ENCODE measurements at regions of chr7 and their contacts with region 1.

Region 1: GRCh38 chr7:7761340-7761980 is 43.1 kb upstream of the RPA3 start:
- DNase-seq: no peak
- H3K4me3 Mint-ChIP-seq: peak overlapping the region; percentile 90
- H3K27ac Mint-ChIP-seq: peak overlapping the region; percentile 15
- H3K4me1 Mint-ChIP-seq: peaks cover 33% of the 10 kb centered on the region
- H3K27me3 Mint-ChIP-seq: no peaks in the 10 kb centered on the region

Region 2: GRCh38 chr7:7424151-7424873 is 337.1 kb before region 1 on chr7:
- intact Hi-C with region 1: loop called (anchors 5 kb)
- DNase-seq: no peak
- H3K4me3 Mint-ChIP-seq: peak overlapping the region; percentile 67
- H3K27ac Mint-ChIP-seq: no peak overlapping the region
- H3K4me1 Mint-ChIP-seq: no peaks in the 10 kb centered on the region
- H3K27me3 Mint-ChIP-seq: peaks cover 4% of the 10 kb centered on the region

Region 3: DNA sequence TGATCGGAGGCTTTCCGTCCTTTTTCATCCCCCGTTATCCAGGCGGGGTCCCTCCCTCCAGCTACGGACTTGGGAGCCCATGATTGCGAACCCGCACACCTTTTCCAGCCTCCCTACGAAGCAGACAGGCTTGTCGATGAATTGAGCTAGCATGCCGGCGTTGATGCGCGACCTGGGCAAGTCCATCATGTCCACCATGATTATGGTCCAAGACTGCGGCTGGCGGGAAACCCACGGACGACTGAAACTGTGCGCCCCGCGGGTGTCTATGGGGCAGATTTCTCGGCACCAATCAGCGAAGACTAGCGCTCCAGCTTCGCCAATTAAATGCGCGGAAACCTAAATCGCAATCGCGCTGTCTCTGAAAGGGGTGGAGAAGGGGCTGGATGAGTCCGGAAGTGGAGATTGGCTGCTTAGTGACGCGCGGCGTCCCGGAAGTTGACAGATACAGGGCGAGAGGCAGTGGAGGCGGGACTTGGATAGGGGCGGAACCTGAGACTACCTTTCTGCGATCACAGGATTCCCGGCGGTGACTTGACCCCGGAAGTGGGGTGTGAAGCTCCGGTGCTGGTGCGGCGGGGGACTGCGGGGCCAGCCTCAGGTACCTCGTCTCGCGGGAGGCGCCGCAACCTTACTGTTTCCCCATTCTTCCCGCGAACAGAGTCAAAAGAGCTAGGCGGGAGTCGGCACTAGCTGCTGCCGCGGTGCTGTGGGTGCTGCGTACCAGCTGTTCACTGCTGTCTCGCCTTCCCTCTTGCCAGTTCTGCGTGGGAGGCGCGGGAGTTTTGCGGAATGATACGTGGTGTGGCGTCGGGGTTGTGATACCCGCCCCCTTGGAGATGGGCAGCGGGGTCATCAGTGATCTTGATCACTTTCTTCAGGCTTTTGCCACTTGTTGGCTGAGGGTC is 121.0 kb before region 1 on chr7 and contains the start of gene UMAD1:
- intact Hi-C with region 1: loop called (anchors 2 kb)
- DNase-seq: peak; percentile 98
- H3K4me3 Mint-ChIP-seq: peak within 1 kb of the TSS; percentile 96
- H3K27ac Mint-ChIP-seq: peak within 1 kb of the TSS; percentile 97
- H3K4me1 Mint-ChIP-seq: peaks cover 40% of the 10 kb centered on the region
- H3K27me3 Mint-ChIP-seq: no peaks in the 10 kb centered on the region
- total RNA-seq, gene UMAD1: 13.6 and 14.2 TPM in 2 replicates

Region 4: DNA sequence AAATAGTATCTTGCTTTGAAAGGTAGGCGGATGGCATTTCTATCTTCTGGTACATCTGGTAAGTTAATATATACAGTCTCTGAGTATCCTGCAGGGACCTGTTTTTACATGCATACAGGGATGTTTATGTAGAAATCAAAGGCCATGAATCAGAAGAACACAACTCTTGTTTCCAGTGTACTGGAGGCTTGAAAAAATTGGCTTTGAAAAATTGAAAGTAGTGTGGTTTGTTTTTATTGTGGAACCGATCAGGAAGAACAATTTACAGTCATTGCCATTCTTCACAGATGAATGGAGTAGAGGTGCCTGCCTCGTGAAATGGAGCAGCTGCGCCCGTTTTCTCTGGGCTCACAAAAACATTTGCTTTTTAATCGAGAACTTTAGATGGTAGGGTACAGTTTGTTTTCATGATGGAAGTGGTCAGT is 10.9 kb after region 1 on chr7:
- intact Hi-C with region 1: loop called (anchors 1 kb)
- DNase-seq: no peak
- H3K4me3 Mint-ChIP-seq: peak overlapping the region; percentile 54
- H3K27ac Mint-ChIP-seq: peak overlapping the region; percentile 42
- H3K4me1 Mint-ChIP-seq: peaks cover 23% of the 10 kb centered on the region
- H3K27me3 Mint-ChIP-seq: peaks cover 3% of the 10 kb centered on the region

Region 5: DNA sequence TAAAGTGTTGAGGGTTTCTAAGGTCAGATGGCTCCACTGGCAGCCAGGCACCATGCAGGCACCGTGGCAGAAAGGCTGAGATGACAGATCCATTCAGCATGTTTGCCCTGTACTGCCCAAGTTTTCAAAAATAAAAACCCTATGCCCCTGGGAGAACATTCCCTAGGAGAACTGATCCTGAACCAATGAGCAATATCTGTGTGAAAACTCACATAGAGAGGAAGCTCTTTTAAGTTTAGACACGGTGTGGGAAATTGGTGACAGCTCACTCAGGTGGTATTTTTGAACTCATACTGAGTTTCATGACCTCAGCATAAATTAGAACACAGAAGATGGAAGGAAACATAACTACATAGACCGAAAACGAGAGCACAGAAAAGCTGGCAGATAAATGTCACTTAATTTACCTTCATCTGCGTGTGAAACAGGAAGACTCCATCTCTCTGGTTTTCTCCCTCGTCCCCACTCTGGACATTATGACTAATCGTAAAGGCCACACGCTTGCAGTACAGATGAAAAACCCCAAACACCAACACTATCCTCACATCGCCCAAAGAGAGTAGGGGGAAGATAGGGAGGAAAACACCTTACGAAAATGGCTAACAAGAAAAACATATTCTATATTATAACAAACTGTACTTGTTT is 372.8 kb after region 1 on chr7:
- intact Hi-C with region 1: loop called (anchors 1 kb)
- DNase-seq: peak; percentile 46
- H3K4me3 Mint-ChIP-seq: peak overlapping the region; percentile 10
- H3K27ac Mint-ChIP-seq: peak overlapping the region; percentile 70
- H3K4me1 Mint-ChIP-seq: peaks cover 63% of the 10 kb centered on the region
- H3K27me3 Mint-ChIP-seq: no peaks in the 10 kb centered on the region

Region 6: DNA sequence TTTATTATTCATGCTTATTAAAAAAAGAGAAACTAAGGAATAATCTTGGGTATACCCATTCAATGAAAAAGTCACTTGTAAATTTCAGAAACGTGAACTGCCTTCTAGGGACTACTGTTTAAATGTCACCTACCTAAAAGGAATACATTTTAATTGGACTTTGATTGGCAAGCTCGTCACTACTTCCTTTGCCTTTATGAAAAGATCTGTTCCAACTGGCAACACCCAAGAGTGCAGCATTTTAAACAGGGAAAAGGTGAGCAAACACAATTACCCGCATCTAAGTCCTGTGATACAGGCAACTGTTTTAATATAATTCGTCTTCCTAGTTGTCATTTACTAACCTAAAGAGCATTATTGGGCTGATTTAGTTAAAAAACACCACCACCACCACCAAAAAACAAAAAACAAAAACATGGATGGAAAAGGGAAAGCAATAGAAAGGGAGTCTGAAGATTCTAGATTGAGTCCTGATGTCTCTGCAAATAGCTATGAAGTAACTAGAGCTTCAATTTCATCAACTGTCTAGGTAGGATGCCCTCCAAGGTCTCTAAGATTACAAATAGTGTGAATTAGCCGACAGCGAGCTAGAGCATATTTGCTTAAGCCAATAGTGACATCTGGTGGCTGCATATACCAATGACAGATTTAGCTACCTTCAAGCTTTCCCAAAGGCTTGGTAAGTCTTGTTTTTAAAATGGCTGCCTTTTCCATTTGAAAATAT is 534.3 kb after region 1 on chr7:
- intact Hi-C with region 1: loop called (anchors 5 kb)
- DNase-seq: peak; percentile 8
- H3K4me3 Mint-ChIP-seq: no peak overlapping the region
- H3K27ac Mint-ChIP-seq: no peak overlapping the region
- H3K4me1 Mint-ChIP-seq: peaks cover 4% of the 10 kb centered on the region
- H3K27me3 Mint-ChIP-seq: peaks cover 13% of the 10 kb centered on the region

Measured in activated T-helper 1 cell treated with anti-CD3 and anti-CD28 coated beads, Interleukin-12 subunit alpha, Interleukin-12 subunit beta, Interleukin-2, Interleukin-4 antibody, amounts not matched to agents 30 ng/mL and 10 ng/mL and 1 ng/mL, durations not matched to agents 14 hours and 24 hours and 36 hours (primary cell).